ENCODE measurements at regions of chr22 and their contacts with region 1.

Region 1: GRCh38 chr22:45435544-45436139 is 22.1 kb downstream of the RIBC2 start:
- DNase-seq: peak; percentile 85
- ATAC-seq: peak; percentile 94
- H3K4me3 Mint-ChIP-seq: no peak overlapping the region
- H3K27ac Mint-ChIP-seq: no peak overlapping the region
- H3K4me1 Mint-ChIP-seq: peaks cover 10% of the 10 kb centered on the region
- H3K27me3 Mint-ChIP-seq: no peaks in the 10 kb centered on the region
- CTCF ChIP-seq: peak; percentile 92

Region 2: DNA sequence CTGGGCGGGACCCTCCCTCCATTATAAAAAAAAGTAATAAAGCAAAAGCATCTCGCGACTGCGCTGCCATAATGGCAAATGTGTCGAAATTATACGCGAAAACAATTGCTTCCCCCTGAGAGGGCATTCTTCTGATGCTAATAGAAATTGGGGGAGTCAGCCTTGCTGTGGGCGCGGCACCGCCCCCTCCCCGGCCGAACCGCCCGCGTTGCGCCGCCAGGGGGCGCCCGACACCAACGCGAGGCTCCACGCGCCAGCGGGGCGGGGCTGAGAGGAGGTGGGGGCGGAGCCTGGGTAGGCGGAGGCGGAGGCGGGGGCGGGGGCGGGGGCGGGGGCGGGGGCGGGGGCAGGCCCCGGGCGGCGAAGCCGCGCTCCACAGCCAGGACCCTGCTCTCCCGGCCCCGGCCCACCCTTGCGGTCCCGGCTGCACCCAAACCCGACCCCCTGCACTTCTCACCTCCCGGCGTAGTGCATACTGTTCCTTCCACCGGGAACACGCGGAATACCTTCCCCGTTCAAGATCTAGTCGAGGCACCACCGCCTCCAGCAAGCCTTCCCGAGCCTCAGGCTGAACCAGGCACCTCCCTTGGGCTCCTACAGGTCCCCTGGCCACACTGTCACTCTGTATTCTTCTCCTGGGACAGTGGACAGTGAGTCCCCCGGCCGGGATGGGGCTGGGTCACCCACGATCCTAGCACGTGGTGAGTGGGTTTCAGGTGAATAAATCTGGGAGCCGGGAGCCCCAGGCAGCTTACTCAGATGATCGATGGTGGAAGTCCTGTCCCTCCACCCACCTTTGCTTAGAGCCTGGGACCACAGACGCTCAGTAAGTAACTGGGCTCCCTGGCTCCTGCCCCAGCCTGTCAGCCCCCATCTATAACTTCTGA is 166.4 kb before region 1 on chr22:
- CTCF ChIA-PET with region 1: interaction called, 3 read pairs
- POLR2A ChIA-PET with region 1: interaction called, 4 read pairs
- intact Hi-C with region 1: loop called (anchors 2 kb)
- DNase-seq: peak; percentile 83
- ATAC-seq: peak; percentile 93
- H3K4me3 Mint-ChIP-seq: peak overlapping the region; percentile 68
- H3K27ac Mint-ChIP-seq: peak overlapping the region; percentile 24
- H3K4me1 Mint-ChIP-seq: peaks cover 6% of the 10 kb centered on the region
- H3K27me3 Mint-ChIP-seq: peaks cover 13% of the 10 kb centered on the region
- CTCF ChIP-seq: peak; percentile 93

Region 3: DNA sequence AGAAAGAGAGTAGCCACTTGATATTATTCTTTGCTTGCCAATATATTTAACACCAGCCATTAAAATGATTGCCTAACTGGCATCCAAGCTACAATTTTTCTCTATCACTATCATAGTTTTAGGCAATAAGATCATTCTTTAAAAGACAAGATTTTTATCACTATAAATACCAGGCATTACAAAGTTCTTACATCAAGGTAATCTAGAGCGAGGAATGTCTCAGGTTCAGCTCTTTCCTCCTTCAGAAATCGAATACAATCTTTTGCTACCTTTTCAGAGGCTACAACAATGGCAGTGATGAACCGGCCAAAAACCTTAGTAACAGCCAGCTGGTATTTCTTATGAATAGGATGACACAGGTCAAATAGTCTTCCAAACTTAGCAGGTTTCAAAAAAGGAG is 46.1 kb before region 1 on chr22:
- CTCF ChIA-PET with region 1: no interaction called
- POLR2A ChIA-PET with region 1: no interaction called
- intact Hi-C with region 1: no loop called
- DNase-seq: no peak
- ATAC-seq: no peak
- H3K4me3 Mint-ChIP-seq: no peak overlapping the region
- H3K27ac Mint-ChIP-seq: no peak overlapping the region
- H3K4me1 Mint-ChIP-seq: no peaks in the 10 kb centered on the region
- H3K27me3 Mint-ChIP-seq: peaks cover 3% of the 10 kb centered on the region
- CTCF ChIP-seq: no peak

Region 4: DNA sequence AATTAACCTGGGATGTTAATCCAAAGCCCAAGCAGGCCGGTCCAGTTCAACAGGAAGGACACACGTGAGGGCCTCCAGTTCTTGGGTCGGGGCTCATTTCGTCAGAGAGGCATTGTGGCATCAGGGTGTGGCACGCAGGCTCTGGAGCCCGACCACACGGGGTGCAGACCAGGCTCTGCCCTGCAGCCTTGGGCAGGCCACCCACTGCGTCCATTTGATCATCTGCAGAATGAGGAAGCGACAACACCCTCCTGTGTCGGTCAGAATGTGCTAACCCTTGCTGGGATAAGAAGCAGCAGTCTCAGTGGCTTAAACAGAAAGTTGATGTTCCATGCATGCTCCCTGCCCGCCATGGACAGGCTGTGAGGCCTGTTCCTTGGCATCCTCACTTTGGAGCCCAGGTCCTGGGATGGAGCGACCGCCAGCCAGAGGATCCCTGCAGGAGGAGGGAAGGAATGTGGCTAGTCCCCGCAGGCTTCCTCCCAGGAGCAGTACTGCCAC is 11.4 kb before region 1 on chr22:
- CTCF ChIA-PET with region 1: no interaction called
- POLR2A ChIA-PET with region 1: no interaction called
- intact Hi-C with region 1: no loop called
- DNase-seq: no peak
- ATAC-seq: no peak
- H3K4me3 Mint-ChIP-seq: no peak overlapping the region
- H3K27ac Mint-ChIP-seq: no peak overlapping the region
- H3K4me1 Mint-ChIP-seq: no peaks in the 10 kb centered on the region
- H3K27me3 Mint-ChIP-seq: no peaks in the 10 kb centered on the region
- CTCF ChIP-seq: no peak

Region 5: DNA sequence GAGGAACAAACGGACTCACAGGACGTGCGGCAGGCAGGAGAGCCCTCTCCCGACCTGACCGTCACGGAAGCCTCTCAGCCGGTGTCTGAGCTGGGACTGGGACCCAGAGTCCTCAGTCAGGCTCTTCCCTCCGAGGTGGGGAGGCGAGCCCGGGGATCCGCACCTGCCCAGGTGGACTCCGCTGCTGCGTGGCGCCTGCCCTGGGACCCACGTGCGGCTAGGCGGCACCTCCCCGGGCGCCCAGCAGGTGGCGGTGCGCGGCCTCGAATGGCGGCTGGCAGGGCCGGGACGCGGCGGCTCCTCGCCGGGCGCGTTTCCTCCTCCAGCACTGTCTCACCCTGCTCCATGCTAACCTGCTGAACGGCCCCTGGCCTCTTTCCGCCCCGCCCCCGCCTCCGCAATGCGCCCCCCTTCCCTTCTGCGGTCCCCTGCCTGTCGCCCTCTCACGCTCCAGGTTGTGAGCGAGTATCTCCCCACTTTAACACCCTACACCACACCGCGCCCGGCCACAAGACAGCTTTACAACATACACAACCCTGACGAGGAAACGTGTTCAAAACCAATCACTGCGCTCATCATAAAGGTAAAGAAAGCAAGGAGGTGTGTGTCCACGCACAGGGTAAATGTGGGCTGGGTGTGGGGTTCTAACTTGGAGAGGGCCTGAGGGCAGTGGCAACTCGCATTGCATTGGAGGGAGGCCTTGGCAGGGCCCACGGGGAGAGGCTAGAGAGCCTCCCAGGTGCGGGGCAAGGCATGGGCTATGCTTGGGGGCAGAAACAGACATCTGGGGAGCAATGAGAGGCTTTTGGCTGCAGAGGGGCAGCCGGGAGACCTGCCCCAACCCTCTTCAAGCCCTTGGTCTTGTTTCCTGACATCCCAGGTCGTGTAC is 210.1 kb after region 1 on chr22:
- CTCF ChIA-PET with region 1: no interaction called
- POLR2A ChIA-PET with region 1: no interaction called
- intact Hi-C with region 1: no loop called
- DNase-seq: peak; percentile 84
- ATAC-seq: peak; percentile 97
- H3K4me3 Mint-ChIP-seq: peak overlapping the region; percentile 9
- H3K27ac Mint-ChIP-seq: no peak overlapping the region
- H3K4me1 Mint-ChIP-seq: peaks cover 16% of the 10 kb centered on the region
- H3K27me3 Mint-ChIP-seq: peaks cover 18% of the 10 kb centered on the region
- CTCF ChIP-seq: peak; percentile 97